ENCODE measurements at regions of chr5 and their contacts with region 1.

Region 1: DNA sequence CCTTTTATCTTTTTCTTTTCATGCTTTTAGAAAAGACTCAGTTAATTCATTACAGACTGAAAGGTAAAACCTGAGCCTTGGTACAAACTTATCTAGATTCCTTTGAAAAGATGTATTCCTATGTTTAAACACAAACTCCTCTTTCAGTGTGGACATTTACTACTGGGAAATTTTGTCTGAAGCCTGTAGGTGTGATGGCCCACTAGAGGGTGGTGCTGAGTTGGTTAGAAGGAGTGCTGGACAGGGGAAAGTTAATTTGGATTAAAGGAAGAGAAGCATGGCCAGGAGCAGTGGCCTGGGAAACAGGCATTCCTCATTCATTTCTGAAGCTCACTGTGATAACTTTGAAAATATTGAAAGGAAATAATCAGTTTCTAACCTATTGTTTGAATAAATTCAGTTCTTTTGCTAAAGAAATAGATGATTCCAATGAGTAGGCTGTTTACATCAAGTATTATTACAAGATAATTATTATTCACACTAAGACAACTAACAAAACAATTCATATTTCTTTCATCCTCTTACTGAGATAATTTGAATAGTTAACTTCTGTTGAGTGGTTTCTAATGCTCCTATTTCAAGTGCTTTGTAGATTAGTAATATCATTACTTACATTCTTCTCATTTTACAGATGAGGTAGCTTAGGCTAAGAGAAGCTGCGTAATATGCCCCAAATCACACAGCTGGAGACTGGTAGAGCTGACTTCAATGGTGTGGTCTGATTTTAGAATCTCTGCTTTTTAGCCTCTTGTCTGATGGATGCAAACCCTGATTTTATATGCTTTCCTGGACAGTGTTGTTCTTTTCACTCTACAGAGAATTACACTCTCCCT is 150.9 kb downstream of the ADGRV1 start:
- DNase-seq: peak; percentile 20 to 75 (median 45)
- ATAC-seq: peak; percentile 94
- H3K4me3 ChIP-seq: no peak overlapping the region
- H3K27ac ChIP-seq: no peak overlapping the region
- H3K4me1 ChIP-seq: no peaks in the 10 kb centered on the region
- H3K27me3 ChIP-seq: no peaks in the 10 kb centered on the region
- CTCF ChIP-seq: peak; percentile 65 to 82 (median 73)
- EP300 ChIP-seq: no peak
- POLR2A ChIP-seq: no peak
- RAD21 ChIP-seq: peak; percentile 49 to 65

Region 2: GRCh38 chr5:90446961-90447360 is 262.6 kb before region 1 on chr5:
- CTCF ChIA-PET with region 1: no interaction called
- POLR2A ChIA-PET with region 1: no interaction called
- in situ Hi-C with region 1: no loop called
- intact Hi-C with region 1: loop called (anchors 10 kb)
- DNase-seq: no peak
- ATAC-seq: no peak
- H3K4me3 ChIP-seq: no peak overlapping the region
- H3K27ac ChIP-seq: no peak overlapping the region
- H3K4me1 ChIP-seq: no peaks in the 10 kb centered on the region
- H3K27me3 ChIP-seq: no peaks in the 10 kb centered on the region
- CTCF ChIP-seq: no peak
- EP300 ChIP-seq: no peak
- POLR2A ChIP-seq: no peak
- RAD21 ChIP-seq: no peak

Region 3: DNA sequence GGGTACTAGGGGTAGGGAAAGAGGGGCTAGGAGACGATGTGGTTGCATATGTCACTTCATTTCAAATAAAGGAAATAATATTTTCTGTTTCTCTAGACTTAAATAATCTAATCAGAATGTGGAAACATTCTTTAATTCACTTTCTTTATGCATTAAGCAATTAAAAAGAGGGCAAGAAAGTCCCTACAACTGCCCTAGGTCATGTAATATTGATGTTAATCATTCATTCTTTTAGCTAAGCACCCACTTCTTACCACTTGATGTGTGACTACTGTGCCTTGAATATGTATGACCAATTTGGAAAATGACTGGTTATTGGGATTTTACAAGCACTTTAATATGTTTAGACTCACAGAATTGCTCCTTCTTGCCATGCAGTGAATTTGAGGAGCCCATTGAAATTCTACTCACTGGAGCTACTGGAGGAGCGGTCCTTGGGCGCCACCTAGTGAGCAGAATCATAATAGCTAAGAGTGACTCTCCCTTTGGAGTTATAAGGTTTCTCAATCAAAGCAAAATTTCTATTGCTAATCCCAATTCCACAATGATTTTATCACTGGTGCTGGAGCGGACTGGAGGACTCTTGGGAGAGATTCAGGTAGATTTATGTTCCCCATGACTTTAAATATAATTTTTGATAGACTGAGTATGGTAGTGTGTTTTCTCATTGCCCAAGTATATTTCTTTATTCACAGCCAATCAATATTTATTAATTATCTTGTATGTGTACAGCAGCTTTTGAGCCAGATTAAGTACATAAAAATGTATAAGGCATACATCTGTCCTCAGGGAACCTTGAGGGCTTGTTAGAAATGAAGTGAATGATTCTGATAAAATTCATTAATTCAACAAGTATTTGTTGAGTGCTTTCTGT is 74.2 kb after region 1 on chr5:
- CTCF ChIA-PET with region 1: interaction called, 19 read pairs
- POLR2A ChIA-PET with region 1: no interaction called
- in situ Hi-C with region 1: no loop called
- intact Hi-C with region 1: loop called (anchors 1 kb)
- DNase-seq: peak; percentile 52 to 81 (median 60)
- ATAC-seq: peak; percentile 96
- H3K4me3 ChIP-seq: no peak overlapping the region
- H3K27ac ChIP-seq: no peak overlapping the region
- H3K4me1 ChIP-seq: no peaks in the 10 kb centered on the region
- H3K27me3 ChIP-seq: no peaks in the 10 kb centered on the region
- CTCF ChIP-seq: peak; percentile 73 to 95 (median 85)
- EP300 ChIP-seq: no peak
- POLR2A ChIP-seq: no peak
- RAD21 ChIP-seq: peak; percentile 77 to 84

Measured in K562 (cell line).